ENCODE measurements at regions of chr19 and their contacts with region 1.

Region 1: GRCh38 chr19:39125554-39126311 is at the start of gene PAK4:
- DNase-seq: peak; percentile 95
- ATAC-seq: peak; percentile 98
- H3K4me3 Mint-ChIP-seq: peak within 1 kb of the TSS; percentile 94
- H3K27ac Mint-ChIP-seq: peak within 1 kb of the TSS; percentile 93
- H3K4me1 Mint-ChIP-seq: peaks cover 42% of the 10 kb centered on the region
- H3K27me3 Mint-ChIP-seq: peaks cover 5% of the 10 kb centered on the region
- CTCF ChIP-seq: no peak
- total RNA-seq, gene PAK4: 13.7 and 14.2 TPM in 2 replicates

Region 2: DNA sequence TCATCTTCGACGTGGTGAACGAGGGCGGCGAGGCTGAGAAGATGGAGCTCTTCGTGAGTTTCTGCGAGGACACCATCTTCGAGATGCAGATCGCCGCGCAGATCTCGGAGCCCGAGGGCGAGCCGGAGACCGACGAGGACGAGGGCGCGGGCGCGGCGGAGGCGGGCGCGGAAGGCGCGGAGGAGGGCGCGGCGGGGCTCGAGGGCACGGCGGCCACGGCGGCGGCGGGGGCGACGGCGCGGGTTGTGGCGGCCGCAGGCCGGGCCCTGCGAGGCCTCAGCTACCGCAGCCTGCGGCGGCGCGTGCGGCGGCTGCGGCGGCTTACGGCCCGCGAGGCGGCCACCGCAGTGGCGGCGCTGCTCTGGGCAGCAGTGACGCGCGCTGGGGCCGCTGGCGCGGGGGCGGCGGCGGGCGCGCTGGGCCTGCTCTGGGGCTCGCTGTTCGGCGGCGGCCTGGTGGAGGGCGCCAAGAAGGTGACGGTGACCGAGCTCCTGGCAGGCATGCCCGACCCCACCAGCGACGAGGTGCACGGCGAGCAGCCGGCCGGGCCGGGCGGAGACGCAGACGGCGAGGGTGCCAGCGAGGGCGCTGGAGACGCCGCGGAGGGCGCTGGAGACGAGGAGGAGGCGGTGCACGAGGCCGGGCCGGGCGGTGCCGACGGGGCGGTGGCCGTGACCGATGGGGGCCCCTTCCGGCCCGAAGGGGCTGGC is 560.6 kb before region 1 on chr19:
- CTCF ChIA-PET with region 1: no interaction called
- POLR2A ChIA-PET with region 1: no interaction called
- intact Hi-C with region 1: no loop called
- DNase-seq: peak; percentile 37
- ATAC-seq: peak; percentile 70
- H3K4me3 Mint-ChIP-seq: peak overlapping the region; percentile 78
- H3K27ac Mint-ChIP-seq: no peak overlapping the region
- H3K4me1 Mint-ChIP-seq: peaks cover 32% of the 10 kb centered on the region
- H3K27me3 Mint-ChIP-seq: peaks cover 13% of the 10 kb centered on the region
- CTCF ChIP-seq: no peak

Region 3: DNA sequence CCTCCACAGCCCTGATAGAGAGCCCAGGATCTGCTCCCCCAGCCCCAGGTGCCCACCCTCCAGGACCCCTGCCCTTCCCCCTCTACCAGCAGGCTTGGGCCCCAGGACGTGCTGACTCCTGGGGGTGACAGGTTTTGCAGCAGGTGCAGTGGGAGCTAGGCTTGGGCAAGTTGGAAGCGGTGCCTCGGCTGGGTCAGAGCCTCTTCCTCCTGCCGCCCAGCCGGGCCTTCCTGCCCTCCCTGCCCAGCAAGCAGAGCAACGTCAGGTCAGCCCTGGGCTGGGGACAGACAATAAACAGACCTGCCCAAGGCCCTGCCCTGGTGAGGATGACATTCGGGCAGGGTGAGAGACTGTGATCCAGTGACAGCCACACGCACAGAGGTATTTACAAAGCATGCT is 61.8 kb after region 1 on chr19:
- CTCF ChIA-PET with region 1: interaction called, 9 read pairs
- POLR2A ChIA-PET with region 1: no interaction called
- intact Hi-C with region 1: loop called (anchors 1 kb)
- DNase-seq: no peak
- ATAC-seq: no peak
- H3K4me3 Mint-ChIP-seq: no peak overlapping the region
- H3K27ac Mint-ChIP-seq: no peak overlapping the region
- H3K4me1 Mint-ChIP-seq: no peaks in the 10 kb centered on the region
- H3K27me3 Mint-ChIP-seq: peaks cover 6% of the 10 kb centered on the region
- CTCF ChIP-seq: no peak

Region 4: GRCh38 chr19:39341719-39342604 is 216.2 kb after region 1 on chr19 and contains the start of gene SAMD4B:
- CTCF ChIA-PET with region 1: no interaction called
- POLR2A ChIA-PET with region 1: interaction called, 4 read pairs
- intact Hi-C with region 1: loop called (anchors 5 kb)
- DNase-seq: peak; percentile 97
- ATAC-seq: peak; percentile 91
- H3K4me3 Mint-ChIP-seq: peak within 1 kb of the TSS; percentile 99
- H3K27ac Mint-ChIP-seq: peak within 1 kb of the TSS; percentile 97
- H3K4me1 Mint-ChIP-seq: peaks cover 69% of the 10 kb centered on the region
- H3K27me3 Mint-ChIP-seq: no peaks in the 10 kb centered on the region
- CTCF ChIP-seq: no peak
- total RNA-seq, gene SAMD4B: 53.0 and 60.7 TPM in 2 replicates

Region 5: GRCh38 chr19:39412100-39412866 is 286.6 kb after region 1 on chr19 and contains the start of gene PLEKHG2:
- CTCF ChIA-PET with region 1: interaction called, 4 read pairs
- POLR2A ChIA-PET with region 1: interaction called, 6 read pairs
- intact Hi-C with region 1: loop called (anchors 1 kb)
- DNase-seq: peak; percentile 97
- ATAC-seq: peak; percentile 59
- H3K4me3 Mint-ChIP-seq: peak within 1 kb of the TSS; percentile 89
- H3K27ac Mint-ChIP-seq: peak within 1 kb of the TSS; percentile 98
- H3K4me1 Mint-ChIP-seq: peaks cover 59% of the 10 kb centered on the region
- H3K27me3 Mint-ChIP-seq: peaks cover 4% of the 10 kb centered on the region
- CTCF ChIP-seq: no peak
- total RNA-seq, gene PLEKHG2: 111 and 125 TPM in 2 replicates

Region 6: DNA sequence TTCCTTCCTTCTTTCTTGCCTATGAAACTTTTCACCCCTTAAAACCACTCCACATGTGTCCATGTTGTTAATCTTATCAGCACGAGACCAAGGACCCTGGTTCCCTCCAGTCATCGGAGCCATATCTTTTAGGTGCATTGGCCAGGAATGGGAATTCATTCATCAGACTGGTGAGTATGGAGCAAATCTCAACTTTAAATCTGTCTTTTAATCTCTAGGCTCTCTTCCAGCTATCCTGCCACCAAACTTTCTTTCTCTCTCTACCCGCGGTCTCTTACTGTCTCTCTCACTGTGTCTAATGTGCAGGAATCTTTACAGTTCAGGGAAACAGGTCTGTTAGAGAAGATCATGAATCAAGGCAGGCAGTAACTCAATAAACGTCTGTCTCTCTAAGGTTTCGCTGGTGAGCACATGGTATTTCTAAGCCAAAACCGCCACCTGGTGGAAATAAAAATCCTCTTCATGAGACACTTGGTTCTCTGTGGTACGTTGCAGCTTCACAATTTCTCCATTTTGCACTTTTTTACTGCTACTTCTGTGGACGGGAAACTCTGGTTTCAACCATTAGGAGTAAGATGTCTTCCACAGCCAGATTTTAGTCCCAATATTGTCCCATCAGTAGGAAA is 546.1 kb after region 1 on chr19:
- CTCF ChIA-PET with region 1: no interaction called
- POLR2A ChIA-PET with region 1: no interaction called
- intact Hi-C with region 1: loop called (anchors 1 kb)
- DNase-seq: no peak
- ATAC-seq: peak; percentile 68
- H3K4me3 Mint-ChIP-seq: no peak overlapping the region
- H3K27ac Mint-ChIP-seq: no peak overlapping the region
- H3K4me1 Mint-ChIP-seq: peaks cover 4% of the 10 kb centered on the region
- H3K27me3 Mint-ChIP-seq: peaks cover 25% of the 10 kb centered on the region
- CTCF ChIP-seq: no peak

Measured in activated B cell treated with CpG ODN at 0.5 μM for 24 hours (primary cell).